ENCODE measurements at regions of chr12 and their contacts with region 1.

Region 1: GRCh38 chr12:77065361-77066204 is at the start of gene E2F7:
- DNase-seq: peak; percentile 80 to 95
- H3K4me3 ChIP-seq: peak within 1 kb of the TSS; percentile 93
- H3K27ac ChIP-seq: peak within 1 kb of the TSS; percentile 27; the same call in 1 of the 2 replicates
- H3K4me1 ChIP-seq: peaks cover 19% of the 10 kb centered on the region
- H3K27me3 ChIP-seq: no peaks in the 10 kb centered on the region
- CTCF ChIP-seq: no peak
- total RNA-seq, gene E2F7: 9.8 and 14.6 TPM in 2 replicates

Region 2: GRCh38 chr12:77324763-77325468 is 259.3 kb after region 1 on chr12:
- CTCF ChIA-PET with region 1: no interaction called
- POLR2A ChIA-PET with region 1: no interaction called
- intact Hi-C with region 1: loop called (anchors 5 kb)
- DNase-seq: peak in 1 of 2 experiments; percentile 68
- H3K4me3 ChIP-seq: peak overlapping the region; percentile 76
- H3K27ac ChIP-seq: no peak overlapping the region
- H3K4me1 ChIP-seq: no peaks in the 10 kb centered on the region
- H3K27me3 ChIP-seq: no peaks in the 10 kb centered on the region
- CTCF ChIP-seq: 0 out of 2 replicates have a peak, but pooled peaks have one; percentile 45